ENCODE measurements at regions of chr1 and their contacts with region 1.

Region 1: GRCh38 chr1:161792740-161793139 is 26.6 kb downstream of the ATF6 start:
- DNase-seq: peak; percentile 60
- H3K4me3 ChIP-seq: no peak overlapping the region
- H3K27ac ChIP-seq: no peak overlapping the region
- H3K27me3 ChIP-seq: no peaks in the 10 kb centered on the region
- CTCF ChIP-seq: peak; percentile 53

Region 2: GRCh38 chr1:161781995-161782394 is 10.7 kb before region 1 on chr1:
- CTCF ChIA-PET with region 1: interaction called, 15 read pairs
- POLR2A ChIA-PET with region 1: no interaction called
- DNase-seq: no peak
- H3K4me3 ChIP-seq: no peak overlapping the region
- H3K27ac ChIP-seq: no peak overlapping the region
- H3K27me3 ChIP-seq: no peaks in the 10 kb centered on the region
- CTCF ChIP-seq: no peak

Region 3: DNA sequence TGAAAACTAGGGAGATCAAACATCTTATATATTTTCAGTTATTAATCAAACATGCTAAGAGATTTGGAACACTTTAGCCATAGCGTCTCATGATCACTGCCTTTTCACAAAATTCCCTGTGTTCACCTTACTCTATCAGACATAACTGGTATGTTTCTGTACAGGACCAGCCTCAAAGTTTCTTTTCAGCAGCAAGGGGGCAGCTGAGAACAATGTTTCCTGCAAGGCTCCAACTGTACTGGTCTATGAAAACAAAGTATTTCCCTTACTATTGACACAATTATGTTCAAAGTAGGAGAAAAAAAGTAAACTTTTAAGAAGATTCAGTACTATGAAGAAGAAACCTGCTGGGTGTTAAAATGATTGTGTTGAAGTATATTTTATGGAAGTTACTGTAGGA is 71.8 kb after region 1 on chr1:
- CTCF ChIA-PET with region 1: interaction called, 16 read pairs
- POLR2A ChIA-PET with region 1: no interaction called
- DNase-seq: no peak
- H3K4me3 ChIP-seq: no peak overlapping the region
- H3K27ac ChIP-seq: no peak overlapping the region
- H3K27me3 ChIP-seq: no peaks in the 10 kb centered on the region
- CTCF ChIP-seq: peak; percentile 59

Region 4: GRCh38 chr1:161930064-161930463 is 137.3 kb after region 1 on chr1:
- CTCF ChIA-PET with region 1: interaction called, 11 read pairs
- POLR2A ChIA-PET with region 1: no interaction called
- DNase-seq: no peak
- H3K4me3 ChIP-seq: no peak overlapping the region
- H3K27ac ChIP-seq: no peak overlapping the region
- H3K27me3 ChIP-seq: no peaks in the 10 kb centered on the region
- CTCF ChIP-seq: no peak

Region 5: DNA sequence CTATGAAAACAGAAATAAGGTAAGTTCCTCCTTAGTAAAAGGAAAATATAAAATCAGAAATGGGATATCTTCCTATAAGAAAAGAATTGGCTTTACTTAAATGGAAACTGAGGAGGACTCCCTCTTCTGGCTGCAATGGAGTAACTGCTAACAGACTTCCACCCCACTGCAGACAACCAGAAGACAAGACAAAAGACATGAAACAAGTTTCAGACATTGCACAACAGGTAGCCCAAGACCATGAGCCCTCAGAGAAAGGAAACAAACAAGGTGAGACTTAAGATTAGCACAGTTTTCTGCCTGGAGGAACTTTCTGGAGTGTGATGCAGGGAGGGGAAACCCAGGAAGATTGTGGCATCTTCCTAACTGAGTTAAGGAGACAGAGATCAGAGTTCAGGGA is 247.9 kb after region 1 on chr1:
- CTCF ChIA-PET with region 1: interaction called, 771 read pairs
- POLR2A ChIA-PET with region 1: interaction called, 11 read pairs
- DNase-seq: no peak
- H3K4me3 ChIP-seq: no peak overlapping the region
- H3K27ac ChIP-seq: no peak overlapping the region
- H3K27me3 ChIP-seq: peaks cover 2% of the 10 kb centered on the region
- CTCF ChIP-seq: peak; percentile 64

Region 6: DNA sequence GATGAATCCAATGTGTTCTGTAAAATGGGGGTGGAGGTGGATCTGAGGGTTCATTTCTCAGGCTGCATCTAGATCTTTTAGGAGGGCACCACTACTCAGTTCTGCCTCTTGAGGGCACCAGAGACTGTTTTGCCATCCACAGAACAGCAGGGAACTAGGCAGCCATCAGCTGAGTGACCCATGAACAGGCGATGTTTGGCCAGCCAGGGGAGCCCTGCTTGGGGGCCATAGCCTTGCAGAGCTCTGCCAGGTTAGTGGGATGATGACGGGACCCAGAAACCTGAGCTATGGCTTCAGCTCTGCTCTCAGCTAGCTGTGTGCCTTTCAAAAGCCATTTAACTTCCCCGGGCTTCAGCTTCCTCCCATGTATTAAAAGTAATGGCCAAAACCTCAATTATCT is 263.3 kb after region 1 on chr1:
- CTCF ChIA-PET with region 1: interaction called, 10 read pairs
- POLR2A ChIA-PET with region 1: no interaction called
- DNase-seq: peak; percentile 23
- H3K4me3 ChIP-seq: no peak overlapping the region
- H3K27ac ChIP-seq: no peak overlapping the region
- H3K27me3 ChIP-seq: peaks cover 15% of the 10 kb centered on the region
- CTCF ChIP-seq: peak; percentile 98

Measured in AG04450 (cell line).